Posterior vena cava (tissue), 2 donors: ENCODE measurements at regions of chr1 and their contacts with region 1.

Region 1: DNA sequence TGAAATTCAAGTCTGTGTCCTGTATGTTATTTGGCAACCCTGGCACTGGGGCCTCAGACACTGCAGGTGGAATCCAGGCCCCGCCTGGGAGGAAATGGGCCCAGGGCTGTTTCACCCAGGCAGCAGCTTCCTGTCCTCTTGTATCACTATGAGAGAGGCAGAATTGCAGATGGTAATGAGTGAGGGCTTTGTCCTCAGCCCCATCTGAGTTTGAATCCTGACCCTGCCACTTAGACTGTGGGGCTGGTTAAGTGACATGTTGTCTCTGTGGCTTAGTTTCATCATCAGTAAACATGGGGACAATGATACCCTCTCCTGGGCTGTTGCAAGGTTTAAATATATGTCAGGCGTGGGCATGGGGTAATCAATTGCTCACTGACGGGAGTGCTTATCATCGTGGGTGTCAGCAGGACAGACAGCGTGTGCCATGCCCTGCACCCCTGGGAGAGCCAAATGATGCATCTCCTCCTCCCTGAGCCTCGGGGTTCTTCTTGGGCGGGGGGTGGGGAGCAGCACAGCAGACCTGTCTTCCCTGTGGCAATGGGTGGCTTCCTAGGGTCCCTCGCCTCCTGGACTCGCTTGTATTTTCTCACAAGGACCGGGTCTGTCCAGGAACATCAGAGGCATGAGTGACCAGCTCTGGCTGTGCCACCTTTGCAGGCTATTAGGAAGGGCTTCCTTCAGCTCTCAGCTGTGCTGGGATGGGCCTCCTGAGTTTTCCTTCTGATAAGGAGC is 42.1 kb downstream of the ARHGEF10L start:
- DNase-seq: no peak

Region 2: DNA sequence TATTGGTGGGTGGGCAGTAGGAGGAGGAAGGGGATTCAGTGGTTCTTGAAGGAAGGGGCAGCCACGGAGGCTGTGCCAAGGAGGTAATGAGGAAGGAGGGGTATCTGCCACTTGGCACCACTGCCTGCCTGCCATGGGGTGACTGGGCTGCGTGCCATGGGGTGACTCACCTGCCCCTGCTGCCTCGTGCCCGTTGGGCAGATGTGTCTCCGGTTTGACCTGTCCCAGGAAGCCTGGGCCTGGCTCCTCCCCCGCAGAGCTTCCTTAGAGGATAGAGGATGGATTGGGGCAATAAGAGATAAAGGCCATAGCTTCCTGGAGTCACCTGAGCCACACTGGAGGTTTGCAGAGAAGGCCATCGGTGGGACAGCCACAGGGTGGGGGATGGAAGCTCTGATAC is 331.0 kb before region 1 on chr1:
- intact Hi-C with region 1: no loop called
- DNase-seq: no peak

Region 3: GRCh38 chr1:17540255-17541001 is 41.1 kb before region 1 on chr1:
- intact Hi-C with region 1: loop called in 1 of 2 experiments (anchors 5 kb)
- DNase-seq: peak; percentile 92